SK-N-SH (cell line): ENCODE measurements at regions of chr5 and their contacts with region 1.

Region 1: DNA sequence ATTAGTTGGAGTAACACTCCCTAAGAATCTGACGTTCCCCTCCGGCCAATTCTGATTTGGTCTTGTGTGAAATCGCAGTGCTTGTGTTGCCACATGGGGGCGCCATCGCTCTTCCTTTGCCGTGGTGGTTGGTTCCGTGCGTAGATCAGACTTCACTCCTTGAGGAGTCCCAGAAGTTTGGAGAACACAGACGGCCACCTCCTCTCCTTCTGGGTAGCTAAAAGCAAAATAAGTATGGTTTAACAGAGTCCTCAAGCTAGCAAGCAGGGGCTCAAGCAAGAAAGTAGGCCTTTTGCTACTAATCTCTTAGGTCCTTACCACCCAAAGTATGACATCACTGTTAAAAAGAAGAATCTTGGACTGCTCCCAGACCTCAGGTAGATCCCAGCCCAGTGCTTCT is 59.5 kb downstream of the HSPA4 start:
- DNase-seq: peak; percentile 79
- H3K4me3 ChIP-seq: no peak overlapping the region; a peak in 1 of 4 replicates
- H3K27ac ChIP-seq: no peak overlapping the region
- H3K4me1 ChIP-seq: peaks cover 0 to 24% of the 10 kb centered on the region in 2 experiments; a peak in 1 of 4 replicates
- H3K27me3 ChIP-seq: no peaks in the 10 kb centered on the region
- CTCF ChIP-seq: peak; percentile 97
- EP300 ChIP-seq: no peak
- RAD21 ChIP-seq: peak; percentile 99

Region 2: GRCh38 chr5:133130387-133131118 is 19.3 kb after region 1 on chr5:
- CTCF ChIA-PET with region 1: interaction called, 26 read pairs
- POLR2A ChIA-PET with region 1: no interaction called
- DNase-seq: no peak
- H3K4me3 ChIP-seq: no peak overlapping the region
- H3K27ac ChIP-seq: no peak overlapping the region
- H3K4me1 ChIP-seq: peaks cover 0 to 12% of the 10 kb centered on the region in 2 experiments; a peak in 2 of 4 replicates
- H3K27me3 ChIP-seq: no peaks in the 10 kb centered on the region; the same call in 1 of the 2 replicates
- CTCF ChIP-seq: no peak
- EP300 ChIP-seq: no peak
- RAD21 ChIP-seq: no peak

Region 3: GRCh38 chr5:133203317-133204305 is 92.3 kb after region 1 on chr5:
- CTCF ChIA-PET with region 1: interaction called, 11 read pairs
- POLR2A ChIA-PET with region 1: no interaction called
- DNase-seq: no peak
- H3K4me3 ChIP-seq: no peak overlapping the region
- H3K27ac ChIP-seq: no peak overlapping the region
- H3K4me1 ChIP-seq: peaks cover 6 to 13% of the 10 kb centered on the region in 2 experiments; a peak in 1 of 4 replicates
- H3K27me3 ChIP-seq: peaks cover 10% of the 10 kb centered on the region; the same call in 1 of the 2 replicates
- CTCF ChIP-seq: no peak
- EP300 ChIP-seq: no peak
- RAD21 ChIP-seq: no peak

Region 4: GRCh38 chr5:133260715-133261114 is 149.4 kb after region 1 on chr5:
- CTCF ChIA-PET with region 1: interaction called, 12 read pairs
- POLR2A ChIA-PET with region 1: no interaction called
- DNase-seq: no peak
- H3K4me3 ChIP-seq: no peak overlapping the region
- H3K27ac ChIP-seq: no peak overlapping the region
- H3K4me1 ChIP-seq: no peaks in the 10 kb centered on the region
- H3K27me3 ChIP-seq: peaks cover 12% of the 10 kb centered on the region; the same call in 1 of the 2 replicates
- CTCF ChIP-seq: peak; percentile 27; the same call in 1 of the 2 replicates
- EP300 ChIP-seq: no peak
- RAD21 ChIP-seq: peak; percentile 49

Region 5: GRCh38 chr5:133944263-133945185 is 833.2 kb after region 1 on chr5:
- CTCF ChIA-PET with region 1: interaction called, 37 read pairs
- POLR2A ChIA-PET with region 1: no interaction called
- DNase-seq: peak; percentile 81
- H3K4me3 ChIP-seq: peak overlapping the region in 1 of 2 experiments; percentile 40; a peak in 1 of 4 replicates
- H3K27ac ChIP-seq: no peak overlapping the region
- H3K4me1 ChIP-seq: no peaks in the 10 kb centered on the region
- H3K27me3 ChIP-seq: no peaks in the 10 kb centered on the region
- CTCF ChIP-seq: peak; percentile 77
- EP300 ChIP-seq: no peak
- RAD21 ChIP-seq: peak; percentile 96